ENCODE measurements at regions of chr10 and their contacts with region 1.

Region 1: GRCh38 chr10:97463363-97464132 is 17.6 kb downstream of the ZDHHC16 start:
- DNase-seq: peak; percentile 52
- ATAC-seq: peak; percentile 70
- H3K4me3 Mint-ChIP-seq: no peak overlapping the region
- H3K27ac Mint-ChIP-seq: no peak overlapping the region
- H3K4me1 Mint-ChIP-seq: no peaks in the 10 kb centered on the region
- H3K27me3 Mint-ChIP-seq: no peaks in the 10 kb centered on the region

Region 2: GRCh38 chr10:97407211-97407951 is 56.2 kb before region 1 on chr10:
- CTCF ChIA-PET with region 1: interaction called, 5 read pairs
- POLR2A ChIA-PET with region 1: no interaction called
- intact Hi-C with region 1: loop called in 1 of 2 experiments (anchors 5 kb)
- DNase-seq: peak; percentile 81
- ATAC-seq: peak; percentile 97
- H3K4me3 Mint-ChIP-seq: peak overlapping the region; percentile 47
- H3K27ac Mint-ChIP-seq: peak overlapping the region; percentile 56
- H3K4me1 Mint-ChIP-seq: peaks cover 11% of the 10 kb centered on the region
- H3K27me3 Mint-ChIP-seq: no peaks in the 10 kb centered on the region

Measured in activated CD4-positive, alpha-beta T cell treated with anti-CD3 and anti-CD28 coated beads for 36 hours (primary cell).